MCF 10A (cell line): ENCODE measurements at regions of chr2 and their contacts with region 1.

Region 1: GRCh38 chr2:71331581-71332434 is at the start of gene ZNF638:
- DNase-seq: peak; percentile 93
- H3K4me3 Mint-ChIP-seq: peak within 1 kb of the TSS; percentile 99
- H3K27ac Mint-ChIP-seq: peak within 1 kb of the TSS; percentile 100
- H3K4me1 Mint-ChIP-seq: peaks cover 14% of the 10 kb centered on the region
- H3K27me3 Mint-ChIP-seq: no peaks in the 10 kb centered on the region
- CTCF ChIP-seq: peak; percentile 73
- total RNA-seq, gene ZNF638: 112 and 142 TPM in 2 replicates

Region 2: DNA sequence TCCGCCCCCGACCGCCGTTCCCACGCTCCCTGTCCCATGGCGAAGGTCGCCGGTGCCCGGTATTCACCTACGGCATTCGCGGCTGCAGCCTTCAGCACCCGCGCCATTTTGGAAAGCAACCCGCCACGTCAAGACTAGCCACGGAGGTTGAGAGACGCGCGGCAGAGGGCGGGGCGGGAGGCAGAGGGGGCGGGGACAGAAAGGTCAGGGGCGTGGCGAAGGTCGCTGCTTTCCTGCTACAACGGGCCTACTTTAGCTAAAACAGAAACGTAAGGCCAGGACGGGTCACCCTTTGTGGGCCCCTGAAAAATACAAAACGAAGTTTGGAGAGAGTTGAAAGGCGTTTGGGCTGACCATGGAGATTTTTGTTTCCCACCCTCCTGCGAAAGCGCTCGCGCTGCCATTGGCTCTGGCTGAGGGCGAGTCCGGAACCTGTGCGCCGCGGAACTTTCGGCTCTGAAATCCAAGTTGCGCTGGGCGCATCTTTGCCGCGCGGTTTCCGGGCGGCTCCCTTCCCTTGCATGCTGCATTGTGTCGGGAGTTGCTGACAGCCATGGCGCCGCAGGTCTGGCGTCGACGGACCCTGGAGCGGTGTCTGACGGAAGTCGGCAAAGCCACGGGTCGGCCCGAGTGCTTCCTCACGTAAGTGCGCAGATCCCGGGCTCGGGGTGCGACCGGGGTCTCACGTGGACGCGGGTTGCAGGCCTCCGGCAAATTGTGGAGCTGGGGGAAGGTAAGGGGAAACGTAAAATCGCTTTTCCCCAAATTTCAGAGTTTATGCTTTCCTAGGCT is 201.5 kb before region 1 on chr2 and contains the starts of genes MCEE and MPHOSPH10:
- CTCF ChIA-PET with region 1: interaction called, 4 read pairs
- POLR2A ChIA-PET with region 1: interaction called, 14 read pairs
- intact Hi-C with region 1: no loop called
- DNase-seq: peak; percentile 89
- H3K4me3 Mint-ChIP-seq: no peak within 1 kb of the TSS
- H3K27ac Mint-ChIP-seq: no peak within 1 kb of the TSS
- H3K4me1 Mint-ChIP-seq: no peaks in the 10 kb centered on the region
- H3K27me3 Mint-ChIP-seq: no peaks in the 10 kb centered on the region
- CTCF ChIP-seq: no peak
- total RNA-seq, gene MCEE: 14.7 and 14.9 TPM in 2 replicates
- total RNA-seq, gene MPHOSPH10: 31.4 and 32.8 TPM in 2 replicates

Region 3: GRCh38 chr2:71220743-71221142 is 111.1 kb before region 1 on chr2:
- CTCF ChIA-PET with region 1: interaction called, 13 read pairs
- POLR2A ChIA-PET with region 1: interaction called, 53 read pairs
- intact Hi-C with region 1: loop called (anchors 5 kb)
- DNase-seq: no peak
- H3K4me3 Mint-ChIP-seq: no peak overlapping the region
- H3K27ac Mint-ChIP-seq: no peak overlapping the region
- H3K4me1 Mint-ChIP-seq: peaks cover 12% of the 10 kb centered on the region
- H3K27me3 Mint-ChIP-seq: no peaks in the 10 kb centered on the region
- CTCF ChIP-seq: no peak

Region 4: DNA sequence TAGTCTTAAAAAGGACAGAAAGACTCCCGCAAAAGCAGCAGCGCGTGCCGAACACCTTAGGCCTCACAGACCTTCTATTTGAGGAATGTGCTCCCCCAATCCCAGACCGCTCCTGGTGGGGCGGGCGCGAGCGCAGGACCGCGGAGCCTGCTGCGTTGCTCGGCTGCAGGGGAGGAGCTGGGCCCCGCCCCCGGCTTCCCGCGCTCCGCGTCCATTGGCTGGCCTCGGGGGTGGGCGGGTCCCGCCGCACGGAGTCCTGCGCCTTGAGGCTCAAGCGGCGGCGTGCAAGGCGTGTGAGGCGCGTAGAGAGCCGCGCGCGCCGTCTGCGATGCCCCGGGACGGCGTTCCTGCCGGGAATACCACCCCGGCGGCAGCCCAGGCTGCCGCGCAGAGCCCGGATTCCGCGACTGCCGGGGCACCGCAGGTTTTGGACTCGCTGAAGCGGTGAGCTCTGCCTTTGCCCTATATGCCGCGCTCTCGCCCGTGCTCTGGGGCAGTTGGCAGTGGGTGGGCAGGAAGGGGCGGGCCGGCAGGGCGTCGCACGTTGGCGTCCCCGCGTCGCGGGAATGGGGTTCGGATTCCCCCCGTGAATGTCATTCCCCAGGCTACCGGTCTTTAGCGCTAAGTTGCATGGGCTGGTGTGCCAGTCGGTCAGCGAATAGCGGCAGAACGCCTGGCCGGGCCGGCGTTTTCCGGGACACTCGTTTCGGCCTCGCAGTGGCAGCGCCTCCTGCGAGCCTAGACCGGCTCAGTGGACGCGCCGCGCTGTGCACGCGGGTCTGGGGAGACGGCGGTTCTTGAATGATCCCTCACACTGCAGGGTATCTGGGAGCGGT is 55.3 kb before region 1 on chr2:
- CTCF ChIA-PET with region 1: interaction called, 4 read pairs
- POLR2A ChIA-PET with region 1: interaction called, 26 read pairs
- intact Hi-C with region 1: no loop called
- DNase-seq: peak; percentile 91
- H3K4me3 Mint-ChIP-seq: peak overlapping the region; percentile 84
- H3K27ac Mint-ChIP-seq: no peak overlapping the region
- H3K4me1 Mint-ChIP-seq: peaks cover 16% of the 10 kb centered on the region
- H3K27me3 Mint-ChIP-seq: peaks cover 29% of the 10 kb centered on the region
- CTCF ChIP-seq: no peak

Region 5: GRCh38 chr2:71306762-71307161 is 25.0 kb before region 1 on chr2:
- CTCF ChIA-PET with region 1: interaction called, 10 read pairs
- POLR2A ChIA-PET with region 1: interaction called, 8 read pairs
- intact Hi-C with region 1: no loop called
- DNase-seq: peak; percentile 17
- H3K4me3 Mint-ChIP-seq: no peak overlapping the region
- H3K27ac Mint-ChIP-seq: no peak overlapping the region
- H3K4me1 Mint-ChIP-seq: peaks cover 9% of the 10 kb centered on the region
- H3K27me3 Mint-ChIP-seq: no peaks in the 10 kb centered on the region
- CTCF ChIP-seq: no peak

Region 6: DNA sequence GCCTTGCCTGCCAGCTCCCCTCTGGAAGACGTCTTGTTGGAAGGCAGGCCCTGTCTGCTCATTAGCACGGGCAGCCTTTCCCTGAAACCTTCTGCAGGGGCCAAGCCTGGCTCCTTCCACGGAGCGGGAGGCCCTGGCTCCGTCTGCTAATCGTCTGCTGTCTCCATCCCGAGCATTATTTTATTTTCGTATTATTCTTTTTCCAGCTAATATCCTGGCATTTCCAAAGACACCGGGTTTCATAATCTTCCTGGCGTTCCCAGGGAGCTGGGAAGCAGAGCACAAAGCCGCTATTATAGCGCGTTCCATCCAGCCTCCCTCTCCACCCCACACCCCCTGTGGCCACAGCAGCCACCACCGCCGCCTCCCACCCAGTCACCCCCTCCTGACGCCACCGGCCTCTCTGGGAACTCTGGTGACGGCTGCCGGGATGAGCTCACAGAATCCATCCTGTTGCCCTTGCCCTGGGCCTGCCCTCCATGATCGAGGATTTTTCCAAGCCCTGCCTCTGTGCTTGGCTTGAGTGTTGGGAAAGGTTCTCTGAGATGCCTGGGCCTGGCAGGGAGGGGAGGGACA is 247.0 kb after region 1 on chr2:
- CTCF ChIA-PET with region 1: no interaction called
- POLR2A ChIA-PET with region 1: no interaction called
- intact Hi-C with region 1: no loop called
- DNase-seq: no peak
- H3K4me3 Mint-ChIP-seq: no peak overlapping the region
- H3K27ac Mint-ChIP-seq: no peak overlapping the region
- H3K4me1 Mint-ChIP-seq: no peaks in the 10 kb centered on the region
- H3K27me3 Mint-ChIP-seq: no peaks in the 10 kb centered on the region
- CTCF ChIP-seq: no peak